HepG2 (cell line): ENCODE measurements at regions of chr6 and their contacts with region 1.

Region 1: GRCh38 chr6:5115168-5115567 is 30.0 kb downstream of the PPP1R3G start:
- DNase-seq: peak; percentile 91
- ATAC-seq: peak; percentile 94
- H3K4me3 ChIP-seq: no peak overlapping the region
- H3K27ac ChIP-seq: peak overlapping the region; percentile 10
- H3K4me1 ChIP-seq: peaks cover 39% of the 10 kb centered on the region
- H3K27me3 ChIP-seq: no peaks in the 10 kb centered on the region
- CTCF ChIP-seq: peak; percentile 88
- EP300 ChIP-seq: peak in 1 of 2 experiments; percentile 75; a peak in 2 of 4 replicates
- POLR2A ChIP-seq: no peak
- RAD21 ChIP-seq: peak; percentile 88

Region 2: GRCh38 chr6:5135788-5136376 is 20.7 kb after region 1 on chr6:
- CTCF ChIA-PET with region 1: no interaction called
- POLR2A ChIA-PET with region 1: interaction called, 5 read pairs
- in situ Hi-C with region 1: no loop called
- intact Hi-C with region 1: loop called (anchors 2 kb)
- DNase-seq: peak; percentile 48
- ATAC-seq: peak; percentile 70
- H3K4me3 ChIP-seq: no peak overlapping the region
- H3K27ac ChIP-seq: no peak overlapping the region
- H3K4me1 ChIP-seq: peaks cover 25% of the 10 kb centered on the region
- H3K27me3 ChIP-seq: no peaks in the 10 kb centered on the region
- CTCF ChIP-seq: peak; percentile 57
- EP300 ChIP-seq: no peak
- POLR2A ChIP-seq: no peak
- RAD21 ChIP-seq: no peak